ENCODE measurements at regions of chr7 and their contacts with region 1.

Region 1: GRCh38 chr7:105589356-105590077 is 8.2 kb upstream of the EFCAB10 start:
- DNase-seq: peak; percentile 92
- ATAC-seq: peak; percentile 99
- H3K4me3 ChIP-seq: no peak overlapping the region
- H3K27ac ChIP-seq: no peak overlapping the region
- H3K4me1 ChIP-seq: no peaks in the 10 kb centered on the region
- H3K27me3 ChIP-seq: no peaks in the 10 kb centered on the region
- CTCF ChIP-seq: peak; percentile 95

Region 2: DNA sequence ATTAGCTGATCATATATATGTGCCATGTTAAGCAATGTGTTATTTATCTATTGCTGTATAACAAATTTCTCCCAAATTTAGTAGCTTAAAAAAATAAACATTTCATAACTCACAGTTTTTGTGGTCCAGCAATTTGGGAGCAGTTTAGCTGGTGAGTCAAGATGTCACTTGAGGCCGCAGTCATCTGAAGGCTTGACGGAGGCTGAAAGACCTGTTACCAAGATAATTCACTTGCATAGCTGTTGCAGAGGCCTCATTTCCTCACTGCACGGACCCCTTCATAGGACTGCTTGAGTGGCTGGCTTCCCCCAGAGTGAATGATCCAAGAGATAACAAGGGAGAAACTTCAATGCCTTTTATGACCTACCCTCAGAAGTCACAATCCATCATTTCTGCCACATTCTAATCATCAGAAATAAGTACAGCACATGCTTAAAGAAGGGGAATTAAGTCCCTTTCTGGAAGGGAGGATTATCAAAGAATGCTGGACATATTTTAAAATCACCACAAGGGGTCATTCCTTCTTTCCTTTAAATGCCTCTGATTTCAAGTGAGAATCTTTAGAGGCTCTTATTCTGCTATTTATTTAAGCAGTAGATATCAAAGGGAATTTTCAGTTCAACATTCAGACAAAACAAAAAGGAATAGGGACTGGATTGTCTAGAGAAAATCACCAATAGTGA is 190.3 kb before region 1 on chr7:
- CTCF ChIA-PET with region 1: no interaction called
- POLR2A ChIA-PET with region 1: no interaction called
- intact Hi-C with region 1: loop called (anchors 1 kb)
- DNase-seq: peak; percentile 41
- ATAC-seq: peak; percentile 70
- H3K4me3 ChIP-seq: no peak overlapping the region
- H3K27ac ChIP-seq: no peak overlapping the region
- H3K4me1 ChIP-seq: no peaks in the 10 kb centered on the region; the same call in 1 of the 2 replicates
- H3K27me3 ChIP-seq: no peaks in the 10 kb centered on the region
- CTCF ChIP-seq: peak; percentile 58

Region 3: DNA sequence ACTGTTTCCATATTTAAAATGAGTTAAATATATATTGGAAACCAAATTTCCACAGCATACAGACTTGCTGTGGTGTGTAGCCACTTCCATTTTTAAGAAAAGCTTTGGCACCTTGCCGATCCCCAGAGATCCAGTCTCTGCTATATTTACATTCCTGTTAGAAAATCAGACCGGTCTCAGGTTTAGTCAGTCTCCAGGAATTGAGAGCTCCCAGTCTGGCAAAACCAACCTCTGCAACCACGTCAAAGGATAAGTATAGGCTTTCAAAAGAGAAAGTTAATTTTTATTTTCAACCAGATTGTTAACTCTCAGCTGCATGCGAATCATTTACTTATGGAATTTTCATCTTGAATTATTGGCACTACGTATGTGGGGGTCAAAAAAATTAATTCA is 95.6 kb before region 1 on chr7:
- CTCF ChIA-PET with region 1: no interaction called
- POLR2A ChIA-PET with region 1: no interaction called
- intact Hi-C with region 1: loop called (anchors 10 kb)
- DNase-seq: no peak
- ATAC-seq: no peak
- H3K4me3 ChIP-seq: no peak overlapping the region
- H3K27ac ChIP-seq: no peak overlapping the region
- H3K4me1 ChIP-seq: peaks cover 11% of the 10 kb centered on the region
- H3K27me3 ChIP-seq: no peaks in the 10 kb centered on the region
- CTCF ChIP-seq: no peak

Region 4: GRCh38 chr7:105531792-105532671 is 57.5 kb before region 1 on chr7 and contains the start of gene RINT1:
- CTCF ChIA-PET with region 1: interaction called, 6 read pairs
- POLR2A ChIA-PET with region 1: no interaction called
- intact Hi-C with region 1: loop called (anchors 2 kb)
- DNase-seq: peak; percentile 96
- ATAC-seq: peak; percentile 98
- H3K4me3 ChIP-seq: peak within 1 kb of the TSS; percentile 91
- H3K27ac ChIP-seq: peak within 1 kb of the TSS; percentile 12; the same call in 1 of the 2 replicates
- H3K4me1 ChIP-seq: peaks cover 18% of the 10 kb centered on the region
- H3K27me3 ChIP-seq: no peaks in the 10 kb centered on the region
- CTCF ChIP-seq: peak; percentile 88
- total RNA-seq, gene RINT1: 20.8 TPM in 2 replicates

Region 5: GRCh38 chr7:106041140-106041717 is 451.7 kb after region 1 on chr7:
- CTCF ChIA-PET with region 1: no interaction called
- POLR2A ChIA-PET with region 1: no interaction called
- intact Hi-C with region 1: loop called (anchors 5 kb)
- DNase-seq: peak; percentile 79
- ATAC-seq: peak; percentile 66
- H3K4me3 ChIP-seq: no peak overlapping the region
- H3K27ac ChIP-seq: no peak overlapping the region
- H3K4me1 ChIP-seq: peaks cover 5% of the 10 kb centered on the region
- H3K27me3 ChIP-seq: no peaks in the 10 kb centered on the region
- CTCF ChIP-seq: peak; percentile 97

Region 6: GRCh38 chr7:106225856-106226255 is 636.3 kb after region 1 on chr7:
- CTCF ChIA-PET with region 1: interaction called, 14 read pairs
- POLR2A ChIA-PET with region 1: no interaction called
- intact Hi-C with region 1: no loop called
- DNase-seq: peak; percentile 50
- ATAC-seq: peak; percentile 47
- H3K4me3 ChIP-seq: no peak overlapping the region
- H3K27ac ChIP-seq: no peak overlapping the region
- H3K4me1 ChIP-seq: peaks cover 15% of the 10 kb centered on the region
- H3K27me3 ChIP-seq: no peaks in the 10 kb centered on the region
- CTCF ChIP-seq: no peak

Measured in PC-3 (cell line).